A673 (cell line): ENCODE measurements at regions of chr3 and their contacts with region 1.

Region 1: DNA sequence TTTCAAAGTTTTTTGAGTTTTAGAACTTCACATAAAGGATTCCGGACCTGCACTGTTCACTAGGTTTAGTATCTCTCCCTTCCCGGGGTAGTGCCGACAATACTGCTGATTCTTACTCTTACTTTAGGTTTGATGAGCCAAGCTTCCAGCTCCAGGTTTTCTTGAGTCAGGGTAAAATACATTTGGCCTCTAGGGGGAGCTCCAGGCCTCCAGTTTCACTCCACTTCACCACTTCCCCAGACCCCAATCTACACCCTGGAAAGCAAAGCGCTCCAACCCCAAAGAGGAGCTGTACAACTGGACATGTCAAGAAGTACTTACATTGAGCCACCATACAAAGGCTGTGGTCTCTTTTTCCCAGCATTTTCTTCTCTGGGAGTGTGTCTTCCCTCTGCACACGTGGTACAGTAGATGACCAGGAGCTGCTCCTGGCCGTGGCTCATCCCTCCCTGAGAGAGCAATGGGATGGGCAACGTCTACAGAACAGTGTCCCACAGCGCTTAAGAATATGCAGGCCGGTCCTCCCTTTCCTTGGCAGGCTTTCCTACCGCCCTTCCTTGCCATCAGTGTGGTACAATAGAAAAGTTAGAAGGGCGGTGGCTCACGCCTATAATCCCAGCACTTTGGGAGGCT is 93.9 kb upstream of the CCDC80 start:
- DNase-seq: peak; percentile 80
- H3K4me3 ChIP-seq: no peak overlapping the region
- H3K27ac ChIP-seq: no peak overlapping the region
- H3K4me1 ChIP-seq: no peaks in the 10 kb centered on the region
- H3K27me3 ChIP-seq: peaks cover 6% of the 10 kb centered on the region
- CTCF ChIP-seq: peak; percentile 81

Region 2: GRCh38 chr3:112582244-112582874 is 152.5 kb before region 1 on chr3:
- CTCF ChIA-PET with region 1: interaction called, 5 read pairs
- POLR2A ChIA-PET with region 1: no interaction called
- intact Hi-C with region 1: loop called (anchors 5 kb)
- DNase-seq: peak; percentile 68
- H3K4me3 ChIP-seq: no peak overlapping the region
- H3K27ac ChIP-seq: no peak overlapping the region
- H3K4me1 ChIP-seq: no peaks in the 10 kb centered on the region
- H3K27me3 ChIP-seq: no peaks in the 10 kb centered on the region
- CTCF ChIP-seq: peak; percentile 74

Region 3: DNA sequence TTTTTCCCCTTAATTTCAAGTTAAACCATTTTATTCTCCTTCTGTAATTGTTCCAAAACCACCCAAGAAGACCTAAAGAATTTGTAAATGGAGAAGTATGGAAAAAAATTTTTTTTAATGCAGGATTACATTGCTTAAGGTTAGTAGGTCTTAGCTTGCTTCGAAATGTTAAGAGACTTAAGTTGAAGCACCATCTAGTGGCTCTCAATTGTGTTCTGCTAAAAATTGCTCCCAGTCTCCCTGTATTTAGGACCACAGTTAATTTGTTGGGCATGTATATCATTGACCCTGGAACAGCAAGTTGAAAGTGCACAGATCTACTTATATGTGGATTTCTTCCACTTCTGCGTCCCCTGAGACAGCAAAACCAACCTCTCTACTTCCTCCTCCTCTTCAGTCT is 79.4 kb after region 1 on chr3:
- CTCF ChIA-PET with region 1: interaction called, 11 read pairs
- POLR2A ChIA-PET with region 1: no interaction called
- intact Hi-C with region 1: loop called (anchors 5 kb)
- DNase-seq: peak; percentile 33
- H3K4me3 ChIP-seq: no peak overlapping the region
- H3K27ac ChIP-seq: no peak overlapping the region
- H3K4me1 ChIP-seq: no peaks in the 10 kb centered on the region
- H3K27me3 ChIP-seq: no peaks in the 10 kb centered on the region
- CTCF ChIP-seq: peak; percentile 48

Region 4: DNA sequence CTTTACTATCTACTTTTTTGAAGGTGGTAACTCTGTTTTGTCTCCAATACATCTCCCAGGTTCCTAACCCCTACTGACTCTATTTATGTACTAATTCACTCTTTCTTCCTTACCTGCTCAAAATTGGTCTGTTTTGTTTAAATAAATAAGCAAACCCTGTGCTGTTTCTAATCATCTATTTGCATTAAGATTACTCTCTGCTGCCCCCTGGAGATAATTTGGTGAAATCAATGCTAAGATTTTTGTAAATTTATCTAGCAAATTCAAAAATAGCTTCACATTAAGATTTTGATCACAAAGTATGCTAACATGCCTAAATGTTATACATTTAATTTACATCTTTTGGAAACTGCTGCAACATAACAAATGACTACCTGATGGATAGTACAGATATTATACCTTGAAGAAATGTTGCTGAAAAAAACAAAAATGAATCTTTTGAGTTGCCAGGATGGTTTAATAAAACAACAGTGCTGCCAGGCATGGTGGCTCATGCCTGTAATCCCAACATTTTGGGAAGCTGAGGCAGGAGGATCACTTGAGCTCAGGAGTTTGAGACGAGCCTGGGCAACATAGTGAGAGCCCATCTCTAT is 244.5 kb after region 1 on chr3:
- CTCF ChIA-PET with region 1: interaction called, 12 read pairs
- POLR2A ChIA-PET with region 1: no interaction called
- intact Hi-C with region 1: loop called (anchors 2 kb)
- DNase-seq: peak; percentile 46
- H3K4me3 ChIP-seq: no peak overlapping the region
- H3K27ac ChIP-seq: no peak overlapping the region
- H3K4me1 ChIP-seq: no peaks in the 10 kb centered on the region
- H3K27me3 ChIP-seq: no peaks in the 10 kb centered on the region
- CTCF ChIP-seq: peak; percentile 72

Region 5: DNA sequence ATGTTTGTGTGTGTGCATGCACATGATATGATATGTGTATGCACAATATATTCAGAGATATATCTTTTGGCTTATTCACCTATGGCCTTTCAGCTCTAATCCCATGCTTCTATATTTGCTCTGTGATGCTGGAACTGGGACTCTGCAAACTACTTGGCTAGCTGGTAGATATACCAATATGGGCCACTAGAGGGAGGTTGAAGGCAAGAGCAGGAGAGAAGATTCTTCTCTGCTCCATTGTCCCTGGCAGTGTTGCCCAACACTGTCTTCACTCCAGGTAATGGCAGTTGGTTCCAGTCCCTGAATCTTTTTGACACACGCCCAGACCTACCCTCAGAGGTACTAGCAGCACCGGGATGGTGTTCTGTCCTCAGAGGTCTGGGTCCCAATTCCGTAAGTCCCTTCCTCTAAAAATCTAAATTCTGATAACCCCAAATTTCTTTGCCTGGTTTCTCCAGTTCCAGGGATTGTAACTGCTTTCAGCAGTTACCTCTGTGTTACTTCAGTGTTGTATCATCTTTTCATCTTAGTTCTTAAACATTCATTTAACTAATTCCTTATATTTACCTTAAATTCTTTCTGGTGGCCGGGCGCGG is 300.7 kb after region 1 on chr3:
- CTCF ChIA-PET with region 1: interaction called, 5 read pairs
- POLR2A ChIA-PET with region 1: no interaction called
- intact Hi-C with region 1: loop called (anchors 5 kb)
- DNase-seq: peak; percentile 72
- H3K4me3 ChIP-seq: no peak overlapping the region
- H3K27ac ChIP-seq: no peak overlapping the region
- H3K4me1 ChIP-seq: no peaks in the 10 kb centered on the region
- H3K27me3 ChIP-seq: no peaks in the 10 kb centered on the region
- CTCF ChIP-seq: peak; percentile 82